ENCODE measurements at regions of chr14 and their contacts with region 1.

Region 1: DNA sequence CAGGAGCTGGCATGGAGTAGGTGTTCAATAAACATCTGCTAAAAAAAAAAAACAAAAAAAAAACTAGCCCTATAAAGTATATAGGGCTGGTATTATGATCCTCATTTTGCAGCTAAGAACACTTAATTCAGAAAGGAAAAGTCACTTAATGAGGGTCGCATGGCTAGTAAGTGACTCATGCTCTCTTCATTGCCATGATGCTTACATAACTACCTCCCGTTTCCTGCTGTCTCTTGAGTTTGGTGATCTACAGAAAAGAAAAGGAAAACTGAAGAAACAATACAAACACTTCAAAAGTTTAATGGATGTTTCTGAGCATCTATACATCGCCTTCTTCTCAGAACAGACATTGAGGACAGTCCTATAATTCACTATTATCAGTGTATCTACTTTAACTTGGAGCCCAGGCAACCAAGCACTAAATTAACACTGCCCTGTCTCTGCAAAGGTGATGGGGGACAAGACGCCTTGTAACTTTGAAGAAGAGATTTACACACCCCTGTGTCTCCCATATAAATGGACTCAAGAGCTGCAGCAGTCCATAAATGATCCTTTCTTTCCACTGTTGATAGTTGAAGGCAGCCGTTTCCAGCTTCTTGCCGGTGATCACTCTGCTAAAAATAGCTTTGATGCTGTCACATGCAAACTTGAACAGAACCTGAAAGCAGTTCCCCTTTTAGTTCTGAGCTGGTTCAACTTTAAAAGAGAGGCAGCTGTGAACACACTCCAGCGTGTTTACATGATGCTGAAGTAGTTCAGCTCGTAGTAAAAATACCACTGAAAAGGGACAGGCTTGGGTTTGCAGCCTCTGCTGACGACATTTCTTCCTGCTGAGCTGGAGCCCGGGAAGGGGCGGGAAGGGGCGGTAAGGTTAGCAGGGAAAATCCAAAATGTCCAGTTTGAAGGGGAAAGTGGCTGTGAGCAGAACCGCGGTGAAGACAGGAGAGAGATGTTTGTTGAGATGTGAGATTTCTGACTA is 113.3 kb downstream of the FOXN3 start:
- DNase-seq: peak; percentile 74 to 84 (median 82)
- H3K4me3 ChIP-seq: peak overlapping the region in 2 of 3 experiments; percentile 40 to 68
- H3K4me3 Mint-ChIP-seq: peak overlapping the region; percentile 72 to 75
- H3K27ac ChIP-seq: peak overlapping the region; percentile 89 to 90
- H3K27ac Mint-ChIP-seq: peak overlapping the region; percentile 85 to 98 (median 93)
- H3K4me1 ChIP-seq: peaks cover 48 to 49% of the 10 kb centered on the region in 2 donors
- H3K4me1 Mint-ChIP-seq: peaks cover 59% of the 10 kb centered on the region
- H3K27me3 ChIP-seq: no peaks in the 10 kb centered on the region
- H3K27me3 Mint-ChIP-seq: peaks cover 0 to 2% (median 0%) of the 10 kb centered on the region in 3 donors
- CTCF ChIP-seq: no peak

Region 2: GRCh38 chr14:89249065-89249695 is 54.6 kb before region 1 on chr14:
- intact Hi-C with region 1: no loop called
- DNase-seq: no peak
- H3K4me3 ChIP-seq: no peak overlapping the region
- H3K4me3 Mint-ChIP-seq: no peak overlapping the region
- H3K27ac ChIP-seq: no peak overlapping the region
- H3K27ac Mint-ChIP-seq: no peak overlapping the region
- H3K4me1 ChIP-seq: no peaks in the 10 kb centered on the region
- H3K4me1 Mint-ChIP-seq: peaks cover 3% of the 10 kb centered on the region
- H3K27me3 ChIP-seq: no peaks in the 10 kb centered on the region
- H3K27me3 Mint-ChIP-seq: peaks cover 0 to 3% (median 0%) of the 10 kb centered on the region in 3 donors
- CTCF ChIP-seq: no peak

Region 3: DNA sequence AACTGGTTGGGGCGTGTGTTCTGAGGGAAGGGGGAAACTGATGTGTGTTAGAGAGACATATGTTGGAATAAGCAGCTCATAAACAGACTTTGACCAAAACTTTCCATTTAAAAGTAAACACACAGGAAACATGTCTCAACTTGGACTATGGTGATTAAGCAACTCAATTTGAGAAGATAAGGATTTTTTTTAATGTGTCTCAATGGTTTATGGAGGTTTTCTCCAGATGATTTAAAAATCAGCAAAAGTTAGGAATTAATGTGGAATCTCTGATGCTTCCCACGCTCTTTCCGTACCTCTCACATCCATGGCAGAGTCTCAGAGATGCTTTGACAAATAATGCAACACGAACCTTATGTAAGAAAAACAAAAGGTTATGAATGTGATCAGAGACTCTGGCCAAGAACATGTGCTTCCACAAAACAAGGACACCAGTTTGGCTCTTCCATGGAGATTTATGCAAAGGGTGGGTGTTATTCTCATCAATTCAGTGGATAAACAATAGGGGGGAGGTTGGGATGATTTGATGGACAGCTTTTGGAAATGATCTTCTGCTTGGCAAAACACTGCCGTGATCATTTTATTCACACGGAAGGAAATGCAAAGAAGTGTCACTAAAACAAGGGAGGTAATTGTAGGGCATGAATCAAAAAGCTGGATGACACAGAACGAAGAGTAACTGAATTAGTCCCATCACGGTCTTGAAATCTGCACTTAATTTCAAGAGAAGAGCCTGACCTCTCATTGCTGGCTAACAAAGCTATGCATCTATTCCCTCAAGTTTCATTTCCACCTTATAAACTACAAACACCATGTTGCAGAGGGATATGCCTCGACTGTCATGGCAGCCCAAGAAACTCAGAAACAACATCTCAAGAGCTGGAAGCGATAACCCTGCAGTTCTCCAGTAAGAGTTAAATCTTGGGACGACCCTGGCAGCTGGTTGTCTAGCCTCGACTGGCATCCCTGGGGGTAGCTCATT is 36.7 kb after region 1 on chr14:
- intact Hi-C with region 1: loop called in 1 of 2 experiments (anchors 5 kb)
- DNase-seq: no peak
- H3K4me3 ChIP-seq: no peak overlapping the region
- H3K4me3 Mint-ChIP-seq: no peak overlapping the region
- H3K27ac ChIP-seq: peak overlapping the region in 1 of 2 donors; percentile 37
- H3K27ac Mint-ChIP-seq: peak overlapping the region in 6 of 7 donors; percentile 33 to 82 (median 47)
- H3K4me1 ChIP-seq: peaks cover 18 to 22% of the 10 kb centered on the region in 2 donors
- H3K4me1 Mint-ChIP-seq: peaks cover 36% of the 10 kb centered on the region
- H3K27me3 ChIP-seq: no peaks in the 10 kb centered on the region
- H3K27me3 Mint-ChIP-seq: no peaks in the 10 kb centered on the region
- CTCF ChIP-seq: no peak

Region 4: GRCh38 chr14:89351516-89352404 is 48.0 kb after region 1 on chr14:
- intact Hi-C with region 1: no loop called
- DNase-seq: no peak
- H3K4me3 ChIP-seq: peak overlapping the region in 2 of 3 experiments; percentile 5 to 18
- H3K4me3 Mint-ChIP-seq: peak overlapping the region; percentile 53 to 78
- H3K27ac ChIP-seq: peak overlapping the region in 1 of 2 donors; percentile 70
- H3K27ac Mint-ChIP-seq: peak overlapping the region; percentile 58 to 92 (median 83)
- H3K4me1 ChIP-seq: peaks cover 28 to 36% of the 10 kb centered on the region in 2 donors
- H3K4me1 Mint-ChIP-seq: peaks cover 36% of the 10 kb centered on the region
- H3K27me3 ChIP-seq: no peaks in the 10 kb centered on the region
- H3K27me3 Mint-ChIP-seq: no peaks in the 10 kb centered on the region
- CTCF ChIP-seq: no peak

Region 5: DNA sequence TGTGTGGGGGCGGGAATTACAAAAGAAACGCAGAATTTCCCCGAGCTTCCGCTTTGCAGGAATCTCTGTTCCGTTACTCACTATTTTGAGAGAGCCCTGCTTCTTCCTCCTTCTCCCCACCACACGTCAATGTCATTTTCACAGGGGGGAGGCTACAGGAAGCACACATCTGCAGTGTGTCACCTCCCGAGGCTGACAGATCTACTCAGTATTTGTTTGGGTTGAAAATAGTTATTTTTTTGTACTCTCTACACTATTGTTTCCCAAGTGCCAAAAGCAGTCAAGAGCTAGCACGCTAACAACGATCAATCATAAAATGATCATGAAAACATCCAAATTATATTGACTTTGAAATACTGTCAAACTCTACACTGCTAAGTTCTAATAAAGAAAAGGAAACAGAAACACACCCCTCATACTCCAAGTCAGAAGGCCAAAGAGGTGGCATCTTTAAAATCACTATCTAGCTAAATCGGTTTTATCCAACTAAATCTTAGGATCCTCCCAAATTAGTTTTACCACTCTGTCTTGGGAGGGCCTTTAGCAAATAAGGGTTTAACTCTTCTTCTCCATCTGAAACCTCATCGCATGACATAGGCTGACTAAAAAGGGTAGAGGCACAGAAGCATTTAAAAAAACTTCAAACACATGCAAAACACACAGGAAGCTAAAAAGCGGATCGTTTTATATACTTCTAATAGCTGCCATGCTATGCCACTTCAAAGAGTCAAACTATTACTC is 61.5 kb after region 1 on chr14:
- intact Hi-C with region 1: loop called in 1 of 2 experiments (anchors 5 kb)
- DNase-seq: peak; percentile 83 to 97 (median 93)
- H3K4me3 ChIP-seq: peak overlapping the region in 1 of 3 experiments; percentile 60
- H3K4me3 Mint-ChIP-seq: peak overlapping the region; percentile 40 to 67
- H3K27ac ChIP-seq: peak overlapping the region; percentile 67 to 92
- H3K27ac Mint-ChIP-seq: peak overlapping the region; percentile 89 to 96 (median 93)
- H3K4me1 ChIP-seq: peaks cover 50 to 55% of the 10 kb centered on the region in 2 donors
- H3K4me1 Mint-ChIP-seq: peaks cover 58% of the 10 kb centered on the region
- H3K27me3 ChIP-seq: no peaks in the 10 kb centered on the region
- H3K27me3 Mint-ChIP-seq: peaks cover 0 to 2% (median 0%) of the 10 kb centered on the region in 3 donors
- CTCF ChIP-seq: no peak

Region 6: GRCh38 chr14:89430391-89431236 is 126.9 kb after region 1 on chr14:
- intact Hi-C with region 1: no loop called
- DNase-seq: peak; percentile 46 to 70 (median 59)
- H3K4me3 ChIP-seq: peak overlapping the region; percentile 43 to 82 (median 77)
- H3K4me3 Mint-ChIP-seq: peak overlapping the region; percentile 77 to 90
- H3K27ac ChIP-seq: peak overlapping the region; percentile 82 to 98
- H3K27ac Mint-ChIP-seq: peak overlapping the region; percentile 93 to 98 (median 96)
- H3K4me1 ChIP-seq: peaks cover 41 to 69% of the 10 kb centered on the region in 2 donors
- H3K4me1 Mint-ChIP-seq: peaks cover 62% of the 10 kb centered on the region
- H3K27me3 ChIP-seq: no peaks in the 10 kb centered on the region
- H3K27me3 Mint-ChIP-seq: peaks cover 0 to 2% (median 1%) of the 10 kb centered on the region in 3 donors
- CTCF ChIP-seq: no peak

Measured in CD14-positive monocyte (primary cell).